Left cardiac atrium (tissue), 4 donors: ENCODE measurements at regions of chr17 and their contacts with region 1.

Region 1: GRCh38 chr17:39080421-39081078 is 70.9 kb downstream of the PLXDC1 start:
- DNase-seq: peak; percentile 58
- ATAC-seq: peak; percentile 54 to 60

Region 2: DNA sequence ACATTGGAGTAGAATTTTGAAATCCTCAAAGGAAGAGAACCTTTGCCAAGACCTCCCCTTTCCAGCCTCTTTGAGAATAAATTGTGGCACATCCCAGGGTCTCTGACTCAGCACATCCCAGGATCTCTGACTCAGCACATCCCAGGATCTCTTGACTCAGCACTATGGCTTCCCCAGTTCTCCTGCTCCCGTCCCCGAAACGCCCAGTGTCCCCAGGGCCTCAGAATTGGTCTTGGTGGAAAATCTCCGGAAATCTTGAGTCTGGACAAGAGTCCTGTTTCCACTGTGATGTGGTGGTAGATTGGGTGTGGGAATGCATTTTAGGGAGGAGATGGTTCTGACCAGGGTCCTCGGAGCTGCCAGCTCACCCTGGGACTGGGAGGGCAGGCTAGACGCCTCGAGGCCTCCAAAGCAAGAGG is 51.7 kb after region 1 on chr17:
- intact Hi-C with region 1: loop called in 1 of 2 experiments (anchors 10 kb)
- DNase-seq: peak; percentile 48
- ATAC-seq: peak; percentile 78 to 82

Region 3: DNA sequence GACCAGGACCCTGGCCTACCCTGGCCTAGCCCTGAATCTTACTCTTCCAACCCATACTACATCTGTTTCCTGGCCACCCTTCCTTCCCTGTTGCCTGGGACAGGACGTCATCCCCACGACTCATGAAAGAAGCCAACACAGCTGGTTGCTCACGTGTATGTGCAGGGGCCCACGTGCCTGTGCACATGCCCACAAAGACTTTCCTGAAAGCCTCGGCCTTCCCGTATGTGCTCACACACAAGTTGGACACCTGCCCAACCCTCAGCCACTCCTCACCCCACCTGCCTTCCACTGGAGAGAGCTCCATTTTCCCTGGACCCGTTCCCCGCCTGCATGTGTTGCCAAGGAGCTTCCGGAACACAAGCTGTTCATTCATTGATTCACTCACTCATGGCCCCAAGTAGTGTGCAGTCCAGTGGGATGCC is 63.9 kb after region 1 on chr17:
- intact Hi-C with region 1: loop called (anchors 10 kb)
- DNase-seq: peak; percentile 90
- ATAC-seq: peak; percentile 84